Upper lobe of right lung (tissue), 1 donor: ENCODE measurements at regions of chr1 and their contacts with region 1.

Region 1: DNA sequence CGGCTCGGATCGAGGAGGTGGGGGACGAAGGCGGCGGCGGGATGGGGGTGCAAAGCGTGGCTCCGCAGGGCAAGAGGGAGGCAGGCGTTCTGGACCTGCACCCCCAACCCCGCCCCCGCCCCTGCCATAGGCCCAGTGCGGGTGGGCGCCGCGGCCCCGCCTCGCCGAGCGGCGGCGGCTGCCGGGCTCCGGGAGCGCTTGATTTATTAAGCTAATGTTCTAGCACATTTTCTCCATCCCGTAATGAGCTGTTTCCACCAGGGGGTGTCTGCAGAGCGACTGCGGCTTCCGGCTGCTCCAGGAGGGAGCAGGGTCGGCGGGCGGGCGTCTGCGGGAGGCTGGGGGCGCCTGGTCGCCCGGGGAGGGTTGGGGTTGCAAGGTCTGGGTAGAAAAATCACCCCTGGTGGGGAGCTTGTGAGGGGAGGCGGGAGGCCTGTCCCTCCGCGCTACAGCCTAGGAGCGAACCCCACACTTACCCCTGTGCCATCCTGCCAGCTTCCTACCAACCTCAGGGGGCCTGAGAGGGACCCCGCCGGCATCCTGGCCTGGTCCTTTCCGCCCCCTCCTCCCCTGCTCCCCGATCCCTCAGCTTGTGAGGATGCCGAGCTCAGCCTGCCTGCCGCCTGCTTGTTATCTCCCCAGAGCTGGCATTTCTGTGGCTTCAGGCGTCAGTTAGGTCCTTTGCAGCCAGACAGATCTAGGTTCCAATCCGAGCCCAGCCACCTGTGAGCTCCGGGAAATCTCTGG is 48.5 kb upstream of the ACOT11 start:
- DNase-seq: no peak
- ATAC-seq: peak; percentile 54
- H3K4me3 ChIP-seq: peak overlapping the region; percentile 29
- H3K27ac ChIP-seq: no peak overlapping the region
- H3K4me1 ChIP-seq: no peaks in the 10 kb centered on the region
- H3K27me3 ChIP-seq: peaks cover 51% of the 10 kb centered on the region
- CTCF ChIP-seq: peak; percentile 31

Region 2: DNA sequence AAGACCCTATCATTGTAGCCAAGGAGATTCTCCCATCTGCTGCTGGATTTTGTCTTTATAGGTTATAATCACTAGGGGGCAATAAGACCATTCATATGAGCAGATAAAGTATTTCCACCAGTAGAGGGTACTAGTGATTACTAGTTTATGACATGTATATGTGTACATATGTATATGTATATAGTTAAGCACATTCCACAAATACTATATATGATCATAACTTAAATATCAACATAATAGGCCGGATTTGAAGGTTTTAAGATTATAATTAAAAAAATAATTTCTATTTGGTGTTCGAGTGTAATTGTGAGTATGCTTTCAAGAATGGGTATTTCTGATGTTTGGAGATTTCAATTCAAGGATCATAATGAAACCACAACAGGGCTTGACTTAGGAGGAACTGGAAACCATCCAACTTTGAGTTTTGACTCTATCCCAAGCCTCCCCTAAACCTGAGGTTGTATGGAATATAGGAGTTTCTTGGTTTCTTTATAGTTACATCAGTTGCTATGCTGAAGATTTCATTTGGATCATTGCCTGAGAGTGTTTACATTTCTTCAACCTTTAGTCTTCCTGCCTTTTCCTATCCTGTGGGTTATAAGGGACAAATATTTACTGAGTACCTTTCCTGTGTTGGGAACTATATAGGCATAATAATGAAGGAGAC is 429.2 kb before region 1 on chr1:
- intact Hi-C with region 1: loop called (anchors 10 kb)
- DNase-seq: no peak
- ATAC-seq: peak; percentile 84
- H3K4me3 ChIP-seq: no peak overlapping the region
- H3K27ac ChIP-seq: no peak overlapping the region
- H3K4me1 ChIP-seq: no peaks in the 10 kb centered on the region
- H3K27me3 ChIP-seq: no peaks in the 10 kb centered on the region
- CTCF ChIP-seq: peak; percentile 86

Region 3: DNA sequence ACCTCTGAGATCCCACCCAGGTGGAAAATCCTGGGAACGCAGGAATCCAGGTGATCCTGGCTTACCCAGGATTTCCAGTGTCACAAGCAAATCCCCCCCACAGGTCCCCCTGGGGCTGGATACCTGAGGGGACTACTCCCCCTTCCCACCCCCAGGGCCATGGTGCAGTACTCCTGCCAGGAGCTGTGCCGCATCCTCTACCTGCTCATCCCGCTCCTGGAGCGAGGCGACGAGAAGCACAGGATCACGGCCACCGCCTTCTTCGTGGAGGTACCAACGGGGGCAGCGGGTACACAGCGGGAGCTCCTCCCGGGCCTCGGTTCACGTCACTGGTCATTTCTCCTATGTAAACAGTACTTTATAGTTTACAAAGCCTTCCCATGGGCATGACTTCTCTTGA is 195.7 kb after region 1 on chr1:
- intact Hi-C with region 1: no loop called
- DNase-seq: no peak
- ATAC-seq: no peak
- H3K4me3 ChIP-seq: no peak overlapping the region
- H3K27ac ChIP-seq: no peak overlapping the region
- H3K4me1 ChIP-seq: no peaks in the 10 kb centered on the region
- H3K27me3 ChIP-seq: no peaks in the 10 kb centered on the region
- CTCF ChIP-seq: no peak